ENCODE measurements at regions of chr15 and their contacts with region 1.

Region 1: GRCh38 chr15:45522328-45523160 is at the start of gene SLC30A4:
- DNase-seq: peak; percentile 41 to 91 (median 80)

Region 2: GRCh38 chr15:45549541-45550220 is 27.1 kb after region 1 on chr15:
- intact Hi-C with region 1: no loop called
- DNase-seq: no peak

Region 3: DNA sequence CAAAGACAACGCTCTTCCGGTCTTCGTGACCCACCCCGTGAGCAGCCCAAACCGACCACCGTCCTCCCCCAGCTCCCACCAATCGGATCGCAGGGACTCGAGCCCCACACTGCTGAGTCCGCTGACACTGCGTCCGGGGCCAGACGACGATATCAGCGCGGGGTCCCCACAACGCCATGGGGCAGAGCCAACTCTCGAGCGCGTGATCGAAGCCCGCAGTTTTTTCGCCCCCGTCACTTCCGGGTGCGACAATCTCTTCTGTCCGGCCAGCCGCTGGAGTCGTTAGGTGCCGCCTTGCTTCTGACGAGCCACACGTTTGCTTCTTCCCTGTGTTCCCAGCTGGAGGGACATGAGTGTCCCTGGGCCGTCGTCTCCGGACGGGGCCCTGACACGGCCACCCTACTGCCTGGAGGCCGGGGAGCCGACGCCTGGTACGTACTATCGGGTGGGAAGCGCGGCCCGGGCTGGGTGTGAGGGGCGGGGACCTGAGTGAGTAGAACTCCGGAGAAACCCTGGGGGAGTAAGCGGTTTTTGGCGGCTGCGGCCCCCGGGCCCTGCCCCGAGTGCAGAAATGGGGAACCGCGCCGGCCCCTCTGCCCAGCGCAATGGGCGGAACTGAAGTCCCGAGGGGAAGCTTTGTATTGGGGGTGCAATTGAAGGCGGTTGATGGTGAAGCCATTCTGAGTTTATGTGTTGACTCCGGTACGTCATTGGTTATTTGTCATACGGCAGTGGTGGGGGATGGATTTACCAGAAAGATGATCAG is 64.7 kb after region 1 on chr15 and contains the start of gene BLOC1S6:
- intact Hi-C with region 1: loop called (anchors 2 kb)
- DNase-seq: peak; percentile 82 to 97 (median 92)

Region 4: GRCh38 chr15:45611305-45611704 is 88.8 kb after region 1 on chr15:
- intact Hi-C with region 1: loop called (anchors 5 kb)
- DNase-seq: peak in 1 of 42 donors; percentile 27